Activated CD8-positive, alpha-beta T cell treated with anti-CD3 and anti-CD28 coated beads for 36 hours (primary cell): ENCODE measurements at regions of chr10 and their contacts with region 1.

Region 1: GRCh38 chr10:114103284-114103683 is 59.6 kb downstream of the ADRB1 start:
- DNase-seq: no peak
- ATAC-seq: peak; percentile 48
- H3K4me3 Mint-ChIP-seq: no peak overlapping the region
- H3K27ac Mint-ChIP-seq: no peak overlapping the region
- H3K4me1 Mint-ChIP-seq: peaks cover 31% of the 10 kb centered on the region
- H3K27me3 Mint-ChIP-seq: peaks cover 29% of the 10 kb centered on the region
- CTCF ChIP-seq: peak; percentile 55

Region 2: GRCh38 chr10:113704637-113705343 is 398.5 kb before region 1 on chr10:
- CTCF ChIA-PET with region 1: interaction called, 10 read pairs
- POLR2A ChIA-PET with region 1: no interaction called
- intact Hi-C with region 1: loop called (anchors 10 kb)
- DNase-seq: peak; percentile 36
- ATAC-seq: no peak
- H3K4me3 Mint-ChIP-seq: no peak overlapping the region
- H3K27ac Mint-ChIP-seq: no peak overlapping the region
- H3K4me1 Mint-ChIP-seq: peaks cover 21% of the 10 kb centered on the region
- H3K27me3 Mint-ChIP-seq: no peaks in the 10 kb centered on the region
- CTCF ChIP-seq: peak; percentile 66

Region 3: GRCh38 chr10:113802997-113803396 is 300.3 kb before region 1 on chr10:
- CTCF ChIA-PET with region 1: interaction called, 87 read pairs
- POLR2A ChIA-PET with region 1: no interaction called
- intact Hi-C with region 1: loop called (anchors 1 kb)
- DNase-seq: no peak
- ATAC-seq: no peak
- H3K4me3 Mint-ChIP-seq: no peak overlapping the region
- H3K27ac Mint-ChIP-seq: no peak overlapping the region
- H3K4me1 Mint-ChIP-seq: no peaks in the 10 kb centered on the region
- H3K27me3 Mint-ChIP-seq: peaks cover 9% of the 10 kb centered on the region
- CTCF ChIP-seq: no peak

Region 4: GRCh38 chr10:114458955-114459354 is 355.7 kb after region 1 on chr10:
- CTCF ChIA-PET with region 1: no interaction called
- POLR2A ChIA-PET with region 1: no interaction called
- intact Hi-C with region 1: no loop called
- DNase-seq: peak; percentile 70
- ATAC-seq: peak; percentile 74
- H3K4me3 Mint-ChIP-seq: no peak overlapping the region
- H3K27ac Mint-ChIP-seq: peak overlapping the region; percentile 36
- H3K4me1 Mint-ChIP-seq: peaks cover 22% of the 10 kb centered on the region
- H3K27me3 Mint-ChIP-seq: no peaks in the 10 kb centered on the region
- CTCF ChIP-seq: peak; percentile 43